Heart right ventricle (tissue), 16 donors: ENCODE measurements at regions of chr22 and their contacts with region 1.

Region 1: DNA sequence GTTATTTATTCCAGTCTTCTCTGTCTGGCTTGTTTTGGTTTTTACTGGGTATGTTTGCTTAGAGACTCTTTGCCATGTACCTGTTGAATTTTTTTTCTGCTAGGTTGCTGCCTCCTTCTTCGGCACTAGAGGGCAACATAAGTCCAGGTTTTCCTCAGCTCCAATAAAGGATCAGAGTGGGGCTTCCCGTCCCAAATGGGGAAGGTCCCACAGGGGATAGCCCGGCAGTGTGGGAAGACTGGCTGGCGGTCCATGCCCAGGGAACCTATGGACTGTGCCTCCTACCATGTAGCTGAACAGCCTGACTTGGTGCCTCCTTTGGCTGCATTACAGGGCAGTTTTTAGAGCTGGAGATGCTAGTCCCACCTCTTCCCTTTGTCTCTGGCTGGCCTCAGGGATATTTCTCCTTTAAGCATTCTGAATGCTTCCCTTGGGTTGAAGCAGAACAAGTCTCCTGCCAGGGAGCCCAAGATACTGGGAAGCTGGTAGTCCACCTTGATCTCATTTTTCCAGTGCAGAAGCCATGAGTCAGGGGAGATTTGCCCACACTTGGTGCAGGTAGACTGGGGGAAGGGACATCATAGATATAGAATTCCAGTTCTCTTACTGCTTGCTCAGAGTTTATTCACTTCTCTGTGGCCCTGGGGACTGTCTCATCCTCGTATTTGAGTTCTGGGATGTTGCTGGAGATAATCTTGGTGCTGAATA is 60.2 kb downstream of the BRD1 start:
- DNase-seq: no peak
- ATAC-seq: peak in 3 of 8 donors; percentile 23 to 33 (median 24)
- H3K4me3 ChIP-seq: no peak overlapping the region
- H3K27ac ChIP-seq: no peak overlapping the region
- H3K4me1 ChIP-seq: peaks cover 0 to 10% (median 0%) of the 10 kb centered on the region in 9 donors
- H3K27me3 ChIP-seq: no peaks in the 10 kb centered on the region
- CTCF ChIP-seq: peak in 8 of 9 donors; percentile 30 to 75 (median 60)

Region 2: DNA sequence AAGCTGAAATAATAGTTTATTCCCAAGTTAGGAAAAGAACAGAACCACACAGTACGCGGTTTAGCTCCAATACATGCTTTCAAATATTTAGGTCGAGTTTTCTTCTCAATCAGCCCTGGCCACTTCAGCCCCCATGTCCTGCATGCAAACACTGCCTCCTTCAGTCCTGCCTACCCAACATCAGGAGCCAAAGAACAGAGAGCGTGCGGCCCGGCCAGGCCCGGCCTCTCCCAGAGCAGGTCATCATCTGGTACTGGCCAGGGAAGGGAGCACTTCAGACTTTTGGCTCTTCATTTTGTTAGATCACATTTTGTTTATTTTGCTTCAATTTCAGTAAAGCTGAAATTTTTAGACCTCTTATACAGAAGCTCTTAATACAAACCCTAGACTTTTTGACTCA is 53.5 kb after region 1 on chr22:
- intact Hi-C with region 1: loop called in 1 of 10 experiments (anchors 5 kb)
- DNase-seq: no peak
- ATAC-seq: peak in 6 of 8 donors; percentile 52 to 66 (median 60)
- H3K4me3 ChIP-seq: no peak overlapping the region
- H3K27ac ChIP-seq: no peak overlapping the region
- H3K4me1 ChIP-seq: peaks cover 17 to 65% (median 58%) of the 10 kb centered on the region in 9 donors
- H3K27me3 ChIP-seq: no peaks in the 10 kb centered on the region
- CTCF ChIP-seq: peak in 3 of 9 donors; percentile 13 to 33 (median 20)

Region 3: GRCh38 chr22:49894322-49895054 is 127.0 kb after region 1 on chr22:
- intact Hi-C with region 1: no loop called
- DNase-seq: no peak
- ATAC-seq: no peak
- H3K4me3 ChIP-seq: no peak overlapping the region
- H3K27ac ChIP-seq: no peak overlapping the region
- H3K4me1 ChIP-seq: peaks cover 0 to 12% (median 0%) of the 10 kb centered on the region in 9 donors
- H3K27me3 ChIP-seq: no peaks in the 10 kb centered on the region
- CTCF ChIP-seq: no peak

Region 4: DNA sequence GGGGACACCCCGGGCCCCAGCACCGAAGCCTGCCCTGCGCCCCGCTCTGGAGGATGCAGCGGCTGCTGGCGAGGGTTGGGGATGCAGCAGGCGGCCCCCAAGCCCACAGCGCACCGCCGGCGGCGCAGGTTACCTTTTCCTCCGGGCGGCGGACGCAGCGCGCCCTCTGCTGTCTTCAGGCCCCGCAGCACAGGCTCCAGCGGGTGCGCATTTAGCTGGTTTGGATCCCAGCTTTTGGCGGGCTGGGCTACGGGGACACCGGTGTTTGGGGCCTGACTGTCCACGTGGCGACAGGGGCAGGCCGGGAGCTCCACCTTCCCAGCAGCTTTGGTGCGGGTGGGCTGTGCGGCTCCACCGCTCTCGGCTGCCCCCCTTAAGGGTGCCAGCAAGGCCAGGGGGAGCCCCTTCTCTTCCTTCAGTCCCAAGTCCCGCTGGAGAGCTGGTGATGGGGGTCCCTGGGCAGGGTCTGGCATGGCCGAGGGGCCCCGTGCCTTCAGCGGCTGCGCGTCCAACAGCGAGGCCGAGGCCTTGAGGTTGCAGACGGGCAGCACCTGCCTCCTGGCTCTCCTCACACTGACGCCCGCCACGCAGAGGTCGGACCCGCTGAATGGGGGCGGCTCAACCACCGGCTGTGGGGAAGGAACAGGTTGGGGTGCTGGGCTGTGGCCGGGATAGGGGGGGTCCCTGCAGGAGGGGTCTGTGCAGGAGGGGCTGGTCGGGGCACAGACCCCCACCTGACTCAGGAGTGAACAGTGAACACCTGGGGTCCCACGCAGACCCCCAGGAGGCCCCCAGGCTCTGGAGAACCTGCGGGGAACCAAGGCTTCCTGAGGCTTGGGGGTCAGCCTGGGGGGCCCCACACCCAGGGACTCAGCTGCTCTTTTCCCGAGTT is 263.0 kb after region 1 on chr22:
- intact Hi-C with region 1: loop called in 7 of 10 experiments (anchors 5 to 10 kb)
- DNase-seq: peak; percentile 58 to 71
- ATAC-seq: peak; percentile 83 to 93 (median 88)
- H3K4me3 ChIP-seq: no peak overlapping the region
- H3K27ac ChIP-seq: no peak overlapping the region
- H3K4me1 ChIP-seq: peaks cover 0 to 9% (median 5%) of the 10 kb centered on the region in 9 donors
- H3K27me3 ChIP-seq: peaks cover 0 to 72% (median 50%) of the 10 kb centered on the region in 7 donors
- CTCF ChIP-seq: peak; percentile 84 to 93 (median 88)